ENCODE measurements at regions of chr17 and their contacts with region 1.

Region 1: DNA sequence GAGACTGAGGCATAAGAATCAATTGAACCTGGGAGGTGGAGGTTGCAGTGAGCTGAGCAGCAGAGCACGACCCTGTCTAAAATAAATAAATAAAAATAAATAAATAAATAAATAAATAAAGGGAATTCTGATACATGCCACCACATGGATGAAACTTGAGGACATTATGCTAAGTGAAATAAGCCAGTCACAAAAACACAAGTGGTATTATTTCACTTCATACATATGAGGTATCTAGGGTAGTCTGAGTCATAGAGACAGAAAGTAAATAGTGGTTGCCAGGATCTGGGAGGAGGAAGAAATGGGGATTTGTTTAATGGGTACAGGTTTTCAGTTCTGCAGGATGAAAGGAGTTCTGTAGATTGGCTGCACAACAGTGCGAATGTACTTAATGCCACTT is 16.3 kb downstream of the PIPOX start:
- DNase-seq: no peak
- H3K4me3 ChIP-seq: no peak overlapping the region
- H3K27ac ChIP-seq: no peak overlapping the region
- H3K4me1 ChIP-seq: peaks cover 0 to 10% (median 2%) of the 10 kb centered on the region in 4 donors
- H3K27me3 ChIP-seq: peaks cover 0 to 4% of the 10 kb centered on the region in 2 donors
- CTCF ChIP-seq: no peak

Region 2: DNA sequence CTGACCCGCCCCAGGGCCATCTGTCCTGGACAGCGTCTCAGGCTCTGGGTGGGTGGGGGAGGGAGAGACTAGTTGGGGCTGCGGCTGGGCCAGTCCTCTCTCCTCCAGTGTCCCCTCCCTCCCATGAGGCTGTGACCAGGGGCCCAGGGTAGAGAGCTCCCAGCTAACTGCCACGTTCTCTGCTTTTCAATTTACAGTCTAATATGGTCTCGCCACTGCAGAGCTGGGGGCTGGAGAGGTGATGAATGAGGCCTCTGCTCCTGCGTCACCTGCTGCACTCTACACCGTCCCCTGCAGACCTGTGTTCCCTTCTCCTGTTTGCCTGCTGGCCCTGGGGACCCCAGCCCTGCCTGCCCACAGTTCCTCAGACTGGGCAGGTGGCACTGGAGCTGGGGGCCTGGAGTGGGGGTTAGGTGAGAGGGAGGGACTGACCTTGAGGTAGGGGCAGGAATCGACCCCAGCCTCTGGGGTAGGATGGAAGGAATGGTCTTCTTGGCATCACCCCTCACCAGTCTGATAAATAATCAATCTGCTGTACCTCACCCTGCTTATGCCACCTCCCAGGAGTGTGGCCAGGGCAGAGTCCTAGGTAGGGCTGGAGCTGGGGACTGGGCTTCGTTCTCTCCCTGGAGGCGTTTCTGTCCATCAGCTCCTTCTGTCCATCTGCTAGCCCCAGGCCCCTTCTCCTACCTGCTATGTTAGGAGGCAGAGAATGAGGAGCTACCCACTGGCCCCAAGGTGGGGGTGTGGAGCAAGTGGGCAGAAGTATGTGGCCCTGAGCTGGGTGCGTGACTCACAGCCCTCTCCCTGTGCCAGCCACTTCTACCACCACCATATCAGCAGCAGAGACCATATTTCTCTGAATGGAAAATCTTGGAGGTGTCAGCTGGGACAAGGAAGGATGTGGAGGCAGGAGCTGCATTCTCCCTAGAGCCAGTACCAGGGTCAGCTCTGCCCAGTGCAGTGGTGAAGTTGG is 66.4 kb before region 1 on chr17:
- intact Hi-C with region 1: loop called (anchors 10 kb)
- DNase-seq: no peak
- H3K4me3 ChIP-seq: no peak overlapping the region
- H3K27ac ChIP-seq: no peak overlapping the region
- H3K4me1 ChIP-seq: no peaks in the 10 kb centered on the region
- H3K27me3 ChIP-seq: peaks cover 0 to 48% of the 10 kb centered on the region in 2 donors
- CTCF ChIP-seq: no peak